Activated T-helper 1 cell treated with anti-CD3 and anti-CD28 coated beads, Interleukin-12 subunit alpha, Interleukin-12 subunit beta, Interleukin-2, Interleukin-4 antibody, amounts not matched to agents 30 ng/mL and 10 ng/mL and 1 ng/mL, durations not matched to agents 14 hours and 24 hours and 36 hours (primary cell): ENCODE measurements at regions of chr2 and their contacts with region 1.

Region 1: DNA sequence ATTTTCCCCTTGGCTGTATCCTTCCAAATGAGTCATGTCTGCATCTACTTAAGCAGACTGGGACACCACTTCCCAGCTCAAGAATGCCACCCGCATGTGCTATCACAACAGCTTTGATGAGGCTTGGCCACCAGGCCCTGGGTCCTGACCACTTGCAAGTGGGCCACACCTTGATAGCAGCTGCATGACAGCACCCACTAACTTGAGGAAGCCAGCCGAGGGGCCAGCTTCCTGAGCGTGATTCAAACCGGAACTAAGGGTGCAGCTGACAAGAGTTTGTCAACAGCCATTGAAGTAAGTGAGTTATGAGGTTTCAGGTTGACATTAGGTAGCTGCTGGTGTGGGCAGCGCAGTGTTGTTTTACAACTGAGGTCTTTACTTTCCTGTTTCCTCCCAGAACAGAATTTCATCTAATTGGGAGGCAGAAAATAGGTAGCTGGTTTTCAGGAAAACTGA is 54.4 kb downstream of the EPHA4 start:
- DNase-seq: peak; percentile 76
- H3K4me3 Mint-ChIP-seq: no peak overlapping the region
- H3K27ac Mint-ChIP-seq: no peak overlapping the region
- H3K4me1 Mint-ChIP-seq: peaks cover 5% of the 10 kb centered on the region
- H3K27me3 Mint-ChIP-seq: peaks cover 5% of the 10 kb centered on the region

Region 2: DNA sequence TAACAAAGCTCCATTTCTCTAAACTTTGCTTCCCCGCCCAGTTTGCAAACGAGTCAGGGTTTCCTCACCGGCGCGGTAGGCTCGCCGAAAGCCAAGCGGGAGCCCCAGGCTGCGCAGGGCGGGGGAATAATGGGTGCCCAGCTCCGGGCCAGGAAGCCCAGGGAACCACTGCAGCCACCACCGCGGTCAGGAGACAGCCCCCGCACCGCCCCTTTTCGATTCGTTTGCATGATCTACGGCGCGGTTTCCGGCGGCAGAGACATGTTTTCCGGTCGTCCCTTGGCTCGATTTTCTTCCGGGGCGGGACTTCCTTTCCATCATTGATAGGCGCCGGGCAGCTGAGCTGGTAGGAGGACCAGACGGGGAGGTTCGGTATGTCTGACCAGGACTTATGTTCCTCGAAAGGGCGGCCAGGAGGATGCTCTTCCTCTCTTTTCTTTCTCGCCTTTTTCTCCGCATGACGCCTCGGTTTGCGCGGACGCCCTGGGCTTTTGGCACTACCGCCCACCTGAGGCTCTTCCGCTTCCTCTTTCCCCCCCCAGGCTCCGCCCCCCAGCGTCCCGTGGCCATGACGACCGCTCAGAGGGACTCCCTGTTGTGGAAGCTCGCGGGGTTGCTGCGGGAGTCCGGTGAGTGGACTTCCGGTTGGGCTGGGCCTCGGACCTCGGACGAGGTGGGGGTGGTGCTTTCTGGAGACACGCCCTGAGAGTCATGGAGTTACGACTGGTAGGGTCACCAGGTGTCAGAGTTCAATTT is 1920.0 kb before region 1 on chr2 and contains the start of gene STK11IP:
- intact Hi-C with region 1: loop called (anchors 5 kb)
- DNase-seq: peak; percentile 89
- H3K4me3 Mint-ChIP-seq: peak within 1 kb of the TSS; percentile 90
- H3K27ac Mint-ChIP-seq: peak within 1 kb of the TSS; percentile 96
- H3K4me1 Mint-ChIP-seq: peaks cover 26% of the 10 kb centered on the region
- H3K27me3 Mint-ChIP-seq: peaks cover 2% of the 10 kb centered on the region
- total RNA-seq, gene STK11IP: 38.0 and 38.9 TPM in 2 replicates

Region 3: GRCh38 chr2:221527776-221528309 is 10.1 kb after region 1 on chr2:
- intact Hi-C with region 1: loop called (anchors 1 kb)
- DNase-seq: no peak
- H3K4me3 Mint-ChIP-seq: no peak overlapping the region
- H3K27ac Mint-ChIP-seq: no peak overlapping the region
- H3K4me1 Mint-ChIP-seq: peaks cover 39% of the 10 kb centered on the region
- H3K27me3 Mint-ChIP-seq: no peaks in the 10 kb centered on the region

Region 4: GRCh38 chr2:221554769-221555493 is 37.2 kb after region 1 on chr2:
- intact Hi-C with region 1: loop called (anchors 1 kb)
- DNase-seq: no peak
- H3K4me3 Mint-ChIP-seq: peak overlapping the region; percentile 28
- H3K27ac Mint-ChIP-seq: no peak overlapping the region
- H3K4me1 Mint-ChIP-seq: peaks cover 30% of the 10 kb centered on the region
- H3K27me3 Mint-ChIP-seq: no peaks in the 10 kb centered on the region

Region 5: GRCh38 chr2:221590861-221591365 is 73.2 kb after region 1 on chr2:
- intact Hi-C with region 1: no loop called
- DNase-seq: no peak
- H3K4me3 Mint-ChIP-seq: no peak overlapping the region
- H3K27ac Mint-ChIP-seq: no peak overlapping the region
- H3K4me1 Mint-ChIP-seq: no peaks in the 10 kb centered on the region
- H3K27me3 Mint-ChIP-seq: peaks cover 11% of the 10 kb centered on the region